Dorsolateral prefrontal cortex (tissue), 120 donors: ENCODE measurements at regions of chr6 and their contacts with region 1.

Region 1: DNA sequence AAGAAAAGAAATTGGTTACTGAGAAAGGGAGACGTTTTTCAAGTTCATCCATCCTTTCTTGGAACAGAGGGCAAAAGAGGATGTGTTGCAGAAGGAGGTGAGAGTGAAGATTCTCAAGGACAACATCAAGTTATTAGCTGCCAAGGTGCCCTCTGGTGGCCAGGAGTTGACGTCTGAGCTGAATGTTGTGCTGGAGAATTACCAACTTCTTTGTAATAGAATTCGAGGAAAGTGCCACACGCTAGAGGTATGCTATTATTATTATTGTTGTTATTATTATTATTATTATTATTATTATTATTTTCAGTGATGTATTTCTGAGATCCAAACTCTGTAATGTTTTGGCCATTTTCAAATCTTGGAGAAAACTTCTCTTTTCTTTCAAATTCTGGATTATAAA is 197.0 kb downstream of the UTRN start:
- DNase-seq: peak in 9 of 10 donors; percentile 30 to 73 (median 54)
- H3K4me3 ChIP-seq: no peak overlapping the region
- H3K27ac ChIP-seq: no peak overlapping the region
- H3K27me3 ChIP-seq: no peaks in the 10 kb centered on the region
- CTCF ChIP-seq: peak; percentile 14 to 78 (median 60)

Region 2: GRCh38 chr6:143575440-143575839 is 906.7 kb before region 1 on chr6:
- intact Hi-C with region 1: loop called in 1 of 2 experiments (anchors 10 kb)
- DNase-seq: peak in 4 of 10 donors; percentile 20 to 42 (median 29)
- H3K4me3 ChIP-seq: peak overlapping the region in 1 of 59 donors; percentile 24
- H3K27ac ChIP-seq: no peak overlapping the region
- H3K27me3 ChIP-seq: no peaks in the 10 kb centered on the region
- CTCF ChIP-seq: peak; percentile 72 to 98 (median 88)

Region 3: DNA sequence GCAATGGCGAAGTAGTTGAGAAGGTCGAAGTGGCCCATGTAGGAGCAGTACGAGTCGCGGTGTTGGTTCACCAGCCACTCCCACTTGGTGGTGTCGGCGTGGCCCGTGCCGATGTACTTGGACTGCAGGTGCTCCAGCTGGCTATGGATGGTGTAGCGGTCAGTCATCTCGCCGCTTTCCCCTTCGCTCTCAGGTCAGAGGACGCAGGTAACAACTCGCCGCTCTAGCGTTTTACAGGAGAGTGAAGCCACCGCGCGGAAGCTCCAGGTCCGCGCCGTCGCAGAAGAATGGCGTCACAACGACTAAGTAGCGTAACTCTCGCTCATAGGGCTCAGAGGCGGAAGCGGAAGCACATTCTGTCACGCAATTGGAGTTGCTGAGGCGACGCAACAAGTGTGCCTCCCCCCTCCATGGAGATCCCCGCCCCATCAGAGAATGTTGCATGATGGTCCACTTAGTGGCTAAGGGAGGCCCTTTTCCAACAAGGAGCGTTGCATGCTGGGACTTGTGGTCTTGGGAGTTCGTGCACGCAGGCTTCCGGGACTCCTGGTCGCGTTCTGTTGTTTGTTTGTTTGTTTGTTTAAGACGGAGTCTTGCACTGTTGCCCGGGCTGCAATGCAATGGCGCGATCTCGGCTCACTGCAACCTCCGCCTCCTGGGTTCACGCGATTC is 386.7 kb before region 1 on chr6 and contains the start of gene SF3B5:
- intact Hi-C with region 1: loop called in 1 of 2 experiments (anchors 5 kb)
- DNase-seq: peak; percentile 97 to 99 (median 99)
- H3K4me3 ChIP-seq: peak within 1 kb of the TSS; percentile 66 to 100 (median 94)
- H3K27ac ChIP-seq: peak within 1 kb of the TSS in 54 of 59 donors; percentile 11 to 90 (median 75)
- H3K27me3 ChIP-seq: no peaks in the 10 kb centered on the region
- CTCF ChIP-seq: peak in 31 of 56 donors; percentile 8 to 61 (median 29)
- total RNA-seq, gene SF3B5: 62.2 to 97.4 (median 77.0) TPM

Region 4: DNA sequence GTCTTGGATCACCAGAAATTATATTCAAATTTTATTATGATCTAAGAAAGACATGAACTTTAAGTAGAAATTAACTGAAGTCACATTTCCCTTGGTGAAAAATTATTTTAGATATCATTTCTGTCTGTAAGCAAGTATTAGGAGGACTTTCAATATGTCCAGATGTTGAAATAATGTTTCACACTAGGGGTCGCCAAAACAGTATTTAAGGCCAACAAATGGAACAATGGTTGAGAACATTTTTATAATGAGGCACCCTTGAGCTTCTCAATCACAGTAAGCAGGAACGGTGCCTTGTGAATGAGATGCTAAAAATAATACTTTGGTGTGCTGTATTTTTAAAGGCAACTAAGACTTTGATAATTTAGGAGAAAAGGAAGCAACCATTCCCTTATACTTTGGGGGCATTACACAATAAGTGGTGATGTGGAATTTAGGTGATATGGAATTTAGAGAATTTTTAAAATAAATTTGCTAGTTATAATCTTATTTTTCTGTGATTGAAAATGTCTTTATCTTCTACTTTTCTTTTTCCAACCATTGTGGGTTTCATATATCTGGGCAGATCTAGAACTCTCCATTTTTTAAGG is 377.1 kb before region 1 on chr6:
- intact Hi-C with region 1: loop called in 1 of 2 experiments (anchors 5 kb)
- DNase-seq: no peak
- H3K4me3 ChIP-seq: no peak overlapping the region
- H3K27ac ChIP-seq: no peak overlapping the region
- H3K27me3 ChIP-seq: peaks cover 0 to 9% (median 0%) of the 10 kb centered on the region in 45 donors
- CTCF ChIP-seq: peak; percentile 41 to 88 (median 70)